Gastrocnemius medialis (tissue), 4 donors: ENCODE measurements at regions of chr3 and their contacts with region 1.

Region 1: DNA sequence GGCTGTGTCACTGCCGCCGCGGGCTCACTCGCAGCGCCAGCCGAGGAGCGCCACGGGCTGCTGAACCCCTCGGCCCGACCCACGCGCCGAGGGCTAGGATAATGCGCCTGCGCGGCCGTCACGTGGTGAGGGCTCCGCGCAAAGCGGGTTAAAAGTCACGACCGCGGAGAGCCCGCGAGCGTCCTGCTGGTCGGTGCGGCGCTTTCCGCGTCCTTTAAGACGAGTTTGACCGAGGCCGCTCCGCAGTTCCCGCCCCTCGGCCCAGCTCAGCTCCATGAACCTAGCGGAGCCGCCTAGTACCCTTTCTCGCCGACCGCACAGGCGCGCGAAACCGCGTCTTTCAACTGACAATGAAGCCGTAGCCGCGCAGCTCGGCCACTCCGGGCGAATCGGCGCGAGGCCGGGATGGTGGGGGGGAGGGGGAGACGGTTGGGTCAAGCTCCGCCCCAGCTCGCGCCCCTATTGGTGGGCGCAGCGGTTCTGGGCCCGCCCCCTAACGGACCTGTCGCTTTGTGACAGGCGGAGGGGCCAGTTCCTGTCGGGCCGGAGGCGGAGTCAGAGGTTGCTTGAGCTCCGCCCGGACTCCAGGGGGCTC is 636 bp upstream of the STT3B start:
- DNase-seq: peak; percentile 99
- ATAC-seq: peak; percentile 81 to 87
- H3K4me3 ChIP-seq: peak overlapping the region; percentile 84 to 98 (median 95)
- H3K27ac ChIP-seq: peak overlapping the region; percentile 92 to 99 (median 98)
- H3K4me1 ChIP-seq: peaks cover 37 to 41% of the 10 kb centered on the region in 2 donors
- H3K27me3 ChIP-seq: no peaks in the 10 kb centered on the region
- CTCF ChIP-seq: peak in 3 of 5 experiments; percentile 26 to 33 (median 30)
- POLR2A ChIP-seq: peak; percentile 96 to 98

Region 2: GRCh38 chr3:31462050-31462569 is 70.0 kb before region 1 on chr3:
- in situ Hi-C with region 1: no loop called
- intact Hi-C with region 1: no loop called
- DNase-seq: no peak
- ATAC-seq: no peak
- H3K4me3 ChIP-seq: no peak overlapping the region
- H3K27ac ChIP-seq: no peak overlapping the region
- H3K4me1 ChIP-seq: no peaks in the 10 kb centered on the region
- H3K27me3 ChIP-seq: no peaks in the 10 kb centered on the region
- CTCF ChIP-seq: no peak
- POLR2A ChIP-seq: no peak

Region 3: GRCh38 chr3:31544634-31545033 is 12.5 kb after region 1 on chr3:
- in situ Hi-C with region 1: no loop called
- intact Hi-C with region 1: loop called (anchors 1 kb)
- DNase-seq: peak in 1 of 2 donors; percentile 74
- ATAC-seq: peak; percentile 74 to 92
- H3K4me3 ChIP-seq: peak overlapping the region in 1 of 4 donors; percentile 8
- H3K27ac ChIP-seq: peak overlapping the region; percentile 68 to 82 (median 74)
- H3K4me1 ChIP-seq: peaks cover 52 to 54% of the 10 kb centered on the region in 2 donors
- H3K27me3 ChIP-seq: no peaks in the 10 kb centered on the region
- CTCF ChIP-seq: no peak
- POLR2A ChIP-seq: no peak

Region 4: GRCh38 chr3:31581660-31582059 is 49.6 kb after region 1 on chr3:
- in situ Hi-C with region 1: no loop called
- intact Hi-C with region 1: loop called (anchors 2 kb)
- DNase-seq: no peak
- ATAC-seq: no peak
- H3K4me3 ChIP-seq: no peak overlapping the region
- H3K27ac ChIP-seq: peak overlapping the region; percentile 74 to 85 (median 82)
- H3K4me1 ChIP-seq: peaks cover 25 to 41% of the 10 kb centered on the region in 2 donors
- H3K27me3 ChIP-seq: no peaks in the 10 kb centered on the region
- CTCF ChIP-seq: no peak
- POLR2A ChIP-seq: no peak

Region 5: DNA sequence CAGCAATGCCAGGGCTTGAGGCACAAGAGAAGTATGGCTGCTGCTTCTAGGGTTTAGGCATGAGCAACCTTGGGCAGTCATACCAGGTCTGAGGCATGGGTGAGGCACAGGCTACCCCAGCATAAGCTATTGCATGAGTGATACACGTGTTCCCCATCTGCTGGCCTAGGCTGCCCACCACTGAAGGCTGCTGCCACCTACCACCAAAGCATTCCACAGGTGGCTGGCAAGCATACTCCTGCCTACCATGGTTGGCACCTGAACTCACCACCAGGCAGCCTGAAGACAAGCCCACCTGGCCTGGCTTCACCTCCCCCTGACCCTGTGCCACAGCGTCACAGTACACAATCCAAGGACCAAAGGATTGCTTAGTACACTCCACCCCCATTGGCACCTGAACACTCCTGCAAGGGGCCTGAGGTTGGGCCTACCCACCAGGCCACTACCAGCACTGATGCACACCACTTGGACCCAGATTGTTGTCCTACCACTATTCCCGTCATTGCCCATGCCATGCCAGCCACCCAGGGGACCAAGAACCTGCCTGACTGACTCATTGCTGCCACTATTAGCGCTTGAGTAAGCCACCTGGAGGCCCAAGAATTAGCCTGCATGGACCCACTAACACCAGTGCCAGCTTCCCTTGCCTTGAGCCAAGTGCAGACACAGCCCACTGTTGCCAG is 116.3 kb after region 1 on chr3:
- in situ Hi-C with region 1: no loop called
- intact Hi-C with region 1: loop called (anchors 1 kb)
- DNase-seq: no peak
- ATAC-seq: no peak
- H3K4me3 ChIP-seq: no peak overlapping the region
- H3K27ac ChIP-seq: no peak overlapping the region
- H3K4me1 ChIP-seq: peaks cover 0 to 7% of the 10 kb centered on the region in 2 donors
- H3K27me3 ChIP-seq: no peaks in the 10 kb centered on the region
- CTCF ChIP-seq: no peak
- POLR2A ChIP-seq: no peak

Region 6: DNA sequence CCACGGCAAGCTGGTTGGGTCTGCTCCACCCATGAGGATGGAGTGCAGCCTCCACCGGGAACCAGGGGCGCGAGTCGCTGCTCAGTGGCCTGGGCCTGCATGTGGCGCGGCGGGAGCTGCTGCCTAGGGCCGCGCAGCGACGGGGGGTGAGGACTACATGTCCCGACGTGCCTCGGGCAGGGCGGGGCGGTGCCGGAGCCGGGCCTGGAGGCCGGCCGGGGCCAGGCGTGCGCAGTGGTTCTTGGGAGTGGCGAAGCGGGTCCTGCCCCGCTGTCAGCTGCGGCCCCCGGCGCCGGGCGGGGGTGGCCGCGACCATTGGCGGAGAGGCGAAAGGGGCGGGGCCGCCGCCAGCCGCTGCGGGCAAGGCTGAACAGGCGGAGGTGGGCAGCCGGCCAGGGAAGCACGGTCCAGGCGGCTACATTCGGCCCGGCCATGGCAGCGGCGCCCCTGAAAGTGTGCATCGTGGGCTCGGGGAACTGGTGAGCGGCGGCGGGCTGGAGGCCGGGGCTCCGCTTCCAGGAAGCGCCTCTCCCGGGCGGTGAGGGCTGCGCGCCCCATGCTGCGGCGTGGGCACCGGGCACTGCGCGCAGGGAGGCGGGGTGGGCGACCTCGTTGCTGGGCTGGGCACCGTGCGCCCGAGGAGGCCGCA is 574.3 kb after region 1 on chr3 and contains the start of gene GPD1L:
- in situ Hi-C with region 1: loop called in 1 of 4 experiments (anchors 25 kb)
- intact Hi-C with region 1: loop called (anchors 1 kb)
- DNase-seq: peak; percentile 92 to 95
- ATAC-seq: peak; percentile 57 to 60
- H3K4me3 ChIP-seq: peak within 1 kb of the TSS; percentile 63 to 92 (median 78)
- H3K27ac ChIP-seq: peak within 1 kb of the TSS; percentile 86 to 96 (median 94)
- H3K4me1 ChIP-seq: peaks cover 40 to 49% of the 10 kb centered on the region in 2 donors
- H3K27me3 ChIP-seq: no peaks in the 10 kb centered on the region
- CTCF ChIP-seq: no peak
- POLR2A ChIP-seq: peak; percentile 78 to 87
- total RNA-seq, gene GPD1L: 80.8 to 168 (median 91.3) TPM

Region 7: DNA sequence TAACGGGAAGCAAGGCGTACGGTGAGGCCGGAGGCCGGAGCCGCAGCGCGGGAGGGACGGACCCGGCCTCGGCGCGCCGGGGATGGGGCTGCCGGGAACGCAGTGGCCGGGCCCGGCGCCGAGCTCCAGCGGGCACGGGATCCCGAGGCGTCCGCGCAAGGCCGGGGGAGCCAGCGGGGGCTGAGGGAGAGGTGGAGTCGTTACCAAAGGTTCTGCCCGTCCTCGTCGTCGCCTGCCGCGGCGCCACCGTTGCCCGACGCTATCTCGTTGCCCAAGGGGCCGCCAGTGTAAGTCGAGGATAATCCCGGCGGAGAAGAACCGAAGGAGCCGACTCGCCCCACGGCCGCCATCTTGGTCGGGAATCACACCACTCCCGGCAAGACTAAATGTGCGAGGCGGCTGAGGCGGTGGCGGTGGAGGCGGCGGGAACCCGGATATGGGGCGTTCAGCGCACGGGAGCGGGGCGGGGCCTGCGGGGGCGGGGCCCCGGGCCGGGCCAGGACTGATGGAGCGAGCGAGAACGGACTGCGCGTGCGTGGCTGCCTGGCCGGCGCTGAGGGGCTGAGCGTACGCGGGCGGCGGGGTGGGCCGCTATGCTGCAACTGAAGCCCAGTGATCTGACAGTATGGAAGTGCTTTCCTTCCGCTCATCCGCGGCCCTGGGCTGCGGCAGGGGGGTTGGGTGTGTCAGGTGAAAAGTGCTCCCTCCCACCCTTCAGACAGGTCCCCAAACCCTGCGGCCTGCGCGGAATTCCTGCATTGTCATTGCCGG is 1038.5 kb after region 1 on chr3 and contains the start of gene DYNC1LI1:
- in situ Hi-C with region 1: no loop called
- intact Hi-C with region 1: loop called (anchors 5 kb)
- DNase-seq: peak; percentile 94 to 95
- ATAC-seq: peak; percentile 88 to 91
- H3K4me3 ChIP-seq: peak within 1 kb of the TSS; percentile 73 to 98 (median 86)
- H3K27ac ChIP-seq: peak within 1 kb of the TSS; percentile 96 to 99 (median 98)
- H3K4me1 ChIP-seq: peaks cover 17 to 28% of the 10 kb centered on the region in 2 donors
- H3K27me3 ChIP-seq: no peaks in the 10 kb centered on the region
- CTCF ChIP-seq: peak in 1 of 5 experiments; percentile 7
- POLR2A ChIP-seq: peak; percentile 87 to 88
- total RNA-seq, gene DYNC1LI1: 44.2 to 51.0 (median 47.9) TPM